H1 (cell line): ENCODE measurements at regions of chr6 and their contacts with region 1.

Region 1: DNA sequence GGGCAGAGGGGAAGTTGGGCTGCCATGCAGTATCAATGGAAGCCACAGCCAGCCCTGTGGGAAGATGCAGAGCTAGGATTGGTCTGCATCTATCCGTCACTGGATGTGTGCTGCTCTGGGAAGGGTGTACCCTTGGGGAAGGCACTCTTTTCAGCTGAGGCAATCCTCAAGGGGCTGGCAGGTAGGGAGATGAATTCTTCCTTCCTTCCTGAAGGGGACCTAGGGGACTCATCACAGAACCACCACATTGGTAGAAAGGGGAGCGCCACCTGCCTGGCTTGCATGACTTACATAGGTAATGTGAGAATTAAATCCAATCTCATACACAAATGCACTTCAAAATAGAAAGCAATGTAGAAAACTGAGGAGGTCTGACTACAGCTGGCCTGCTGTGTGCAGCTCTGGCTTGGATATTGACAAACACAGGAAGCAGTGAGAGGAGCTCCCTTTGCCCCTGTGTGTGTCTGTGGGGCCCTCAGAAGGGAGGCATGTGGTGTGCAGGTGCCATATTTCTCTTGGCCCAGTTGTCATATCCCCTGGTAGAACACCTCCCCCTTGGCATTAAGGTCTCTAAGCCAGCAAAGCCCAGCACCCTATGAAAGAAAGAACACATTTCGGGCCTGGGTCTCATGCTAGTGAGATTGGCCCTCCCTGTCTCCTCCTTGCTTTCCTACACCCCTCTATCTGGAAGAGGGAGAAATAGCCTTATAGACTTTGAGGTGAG is 260.3 kb upstream of the MOCS1 start:
- DNase-seq: no peak
- H3K4me3 ChIP-seq: no peak overlapping the region
- H3K27ac ChIP-seq: no peak overlapping the region
- H3K4me1 ChIP-seq: no peaks in the 10 kb centered on the region
- H3K27me3 ChIP-seq: no peaks in the 10 kb centered on the region
- CTCF ChIP-seq: peak in 1 of 3 experiments; percentile 39; a peak in 1 of 4 replicates
- EP300 ChIP-seq: no peak
- POLR2A ChIP-seq: no peak
- RAD21 ChIP-seq: 0 out of 4 replicates have a peak, but pooled peaks of 1 of the 2 experiments have one; percentile 10

Region 2: DNA sequence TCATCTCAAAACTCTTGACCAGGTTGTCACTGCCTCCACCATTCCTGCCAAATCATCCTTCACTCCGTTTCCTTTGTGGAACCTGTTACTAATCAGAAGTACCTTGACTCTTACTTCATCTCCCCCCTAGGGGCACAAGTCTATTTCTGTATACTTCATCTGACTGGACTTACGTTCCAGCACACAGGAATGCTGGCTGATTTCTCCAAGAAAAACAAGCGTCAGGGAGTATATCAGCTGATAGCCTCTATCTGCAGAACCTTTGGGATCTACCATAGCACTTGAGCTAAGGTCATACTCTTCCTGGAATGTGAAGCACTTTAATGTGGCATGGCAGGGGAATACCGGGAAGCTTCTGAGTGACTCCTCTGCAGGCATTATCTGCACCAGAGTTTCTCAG is 82.3 kb before region 1 on chr6:
- CTCF ChIA-PET with region 1: no interaction called
- POLR2A ChIA-PET with region 1: no interaction called
- DNase-seq: no peak
- H3K4me3 ChIP-seq: no peak overlapping the region
- H3K27ac ChIP-seq: no peak overlapping the region
- H3K4me1 ChIP-seq: peaks cover 0 to 4% (median 0%) of the 10 kb centered on the region in 4 experiments; a peak in 1 of 7 replicates
- H3K27me3 ChIP-seq: no peaks in the 10 kb centered on the region
- CTCF ChIP-seq: peak in 2 of 3 experiments; percentile 10 to 45; a peak in 2 of 4 replicates
- EP300 ChIP-seq: no peak
- POLR2A ChIP-seq: no peak
- RAD21 ChIP-seq: peak in 1 of 2 experiments; percentile 31; a peak in 3 of 4 replicates

Region 3: GRCh38 chr6:40205801-40206200 is 11.2 kb after region 1 on chr6:
- CTCF ChIA-PET with region 1: interaction called, 18 read pairs
- POLR2A ChIA-PET with region 1: no interaction called
- DNase-seq: no peak
- H3K4me3 ChIP-seq: no peak overlapping the region
- H3K27ac ChIP-seq: no peak overlapping the region
- H3K4me1 ChIP-seq: peaks cover 0 to 3% (median under 1%) of the 10 kb centered on the region in 4 experiments; a peak in 2 of 7 replicates
- H3K27me3 ChIP-seq: no peaks in the 10 kb centered on the region
- CTCF ChIP-seq: no peak
- EP300 ChIP-seq: no peak
- POLR2A ChIP-seq: no peak
- RAD21 ChIP-seq: no peak